T-cell (primary cell): ENCODE measurements at regions of chr12 and their contacts with region 1.

Region 1: GRCh38 chr12:32617534-32617933 is 61.6 kb upstream of the DNM1L start:
- DNase-seq: no peak
- ATAC-seq: no peak
- H3K4me3 ChIP-seq: no peak overlapping the region
- H3K4me3 Mint-ChIP-seq: no peak overlapping the region
- H3K27ac ChIP-seq: no peak overlapping the region
- H3K27ac Mint-ChIP-seq: no peak overlapping the region
- H3K4me1 ChIP-seq: no peaks in the 10 kb centered on the region
- H3K4me1 Mint-ChIP-seq: no peaks in the 10 kb centered on the region
- H3K27me3 ChIP-seq: peaks cover 0 to 2% of the 10 kb centered on the region in 2 experiments
- H3K27me3 Mint-ChIP-seq: peaks cover 0 to 2% of the 10 kb centered on the region in 2 donors

Region 2: DNA sequence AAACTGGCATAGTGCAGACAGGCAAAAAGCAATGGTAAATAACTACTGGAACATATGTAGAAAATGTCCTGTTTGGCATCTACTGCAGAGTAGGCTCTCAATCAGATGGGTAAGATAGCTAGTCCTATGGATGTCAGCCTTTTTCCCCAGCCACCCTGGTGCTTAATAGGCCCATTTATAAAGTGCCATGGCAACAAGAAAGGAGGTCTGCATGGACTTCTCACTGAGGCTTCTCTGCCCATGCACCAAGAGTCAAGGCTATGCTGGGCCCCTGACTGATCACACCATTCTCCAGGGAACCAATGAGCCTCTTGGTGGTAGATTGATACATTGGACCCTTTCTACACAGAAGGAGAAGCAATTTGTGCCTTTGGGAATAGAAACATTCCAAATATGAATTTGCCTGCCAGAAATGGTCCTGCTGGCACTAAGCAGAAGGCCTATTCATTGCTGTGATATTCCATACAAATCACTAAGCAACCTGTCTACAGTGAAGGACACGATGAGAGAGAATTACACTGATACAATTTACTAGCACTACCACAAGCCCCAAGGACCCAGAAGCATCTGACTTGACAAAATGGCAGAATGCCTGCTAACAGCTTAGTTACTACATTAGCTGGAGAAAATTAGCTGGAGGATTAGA is 614.6 kb before region 1 on chr12:
- CTCF ChIA-PET with region 1: interaction called in 1 of 2 experiments, 10 read pairs
- POLR2A ChIA-PET with region 1: no interaction called
- DNase-seq: no peak
- ATAC-seq: peak in 3 of 4 experiments; percentile 27 to 35 (median 29)
- H3K4me3 ChIP-seq: no peak overlapping the region
- H3K4me3 Mint-ChIP-seq: no peak overlapping the region
- H3K27ac ChIP-seq: no peak overlapping the region
- H3K27ac Mint-ChIP-seq: peak overlapping the region; percentile 13 to 50
- H3K4me1 ChIP-seq: no peaks in the 10 kb centered on the region
- H3K4me1 Mint-ChIP-seq: peaks cover 0 to 4% (median 2%) of the 10 kb centered on the region in 3 donors
- H3K27me3 ChIP-seq: no peaks in the 10 kb centered on the region
- H3K27me3 Mint-ChIP-seq: no peaks in the 10 kb centered on the region

Region 3: DNA sequence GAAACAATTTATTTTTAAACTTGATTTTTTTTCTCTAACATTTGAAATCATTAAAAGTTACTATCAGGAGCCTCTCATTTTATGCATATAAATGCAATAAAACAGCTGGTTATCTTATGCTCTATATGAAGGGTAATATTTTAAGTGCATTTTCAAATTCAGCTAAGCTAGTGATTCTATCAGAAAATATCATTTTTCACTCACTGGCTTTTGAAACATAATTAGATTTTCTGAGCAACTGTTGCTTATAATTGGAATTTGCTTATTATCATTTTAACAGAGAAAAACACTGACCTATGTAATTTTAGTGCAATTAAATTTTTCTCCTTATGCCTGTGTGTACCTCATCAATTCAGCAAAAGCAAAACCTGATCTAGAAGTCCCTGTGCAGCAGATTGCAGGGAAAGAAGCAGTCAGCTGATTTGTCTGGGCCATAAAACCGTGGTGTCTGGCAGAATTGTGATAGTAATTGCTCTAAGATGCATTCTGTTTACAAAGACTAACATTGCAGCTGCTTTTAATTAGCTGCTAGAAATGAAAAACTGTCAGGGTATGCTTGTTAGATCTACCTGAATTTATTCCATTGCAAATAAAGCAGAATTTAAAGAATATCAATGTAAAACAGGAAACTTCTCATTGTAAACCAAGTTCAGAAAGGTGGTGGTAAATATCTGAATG is 435.9 kb before region 1 on chr12:
- CTCF ChIA-PET with region 1: no interaction called
- POLR2A ChIA-PET with region 1: no interaction called
- DNase-seq: no peak
- ATAC-seq: no peak
- H3K4me3 ChIP-seq: no peak overlapping the region
- H3K4me3 Mint-ChIP-seq: no peak overlapping the region
- H3K27ac ChIP-seq: no peak overlapping the region
- H3K27ac Mint-ChIP-seq: no peak overlapping the region
- H3K4me1 ChIP-seq: no peaks in the 10 kb centered on the region
- H3K4me1 Mint-ChIP-seq: peaks cover 0 to 4% (median 0%) of the 10 kb centered on the region in 3 donors
- H3K27me3 ChIP-seq: no peaks in the 10 kb centered on the region
- H3K27me3 Mint-ChIP-seq: no peaks in the 10 kb centered on the region